Left colon (tissue), 2 donors: ENCODE measurements at regions of chr19 and their contacts with region 1.

Region 1: GRCh38 chr19:13588957-13589833 is 82.9 kb upstream of the CACNA1A start:
- DNase-seq: peak; percentile 37 to 75
- ATAC-seq: peak; percentile 83

Region 2: DNA sequence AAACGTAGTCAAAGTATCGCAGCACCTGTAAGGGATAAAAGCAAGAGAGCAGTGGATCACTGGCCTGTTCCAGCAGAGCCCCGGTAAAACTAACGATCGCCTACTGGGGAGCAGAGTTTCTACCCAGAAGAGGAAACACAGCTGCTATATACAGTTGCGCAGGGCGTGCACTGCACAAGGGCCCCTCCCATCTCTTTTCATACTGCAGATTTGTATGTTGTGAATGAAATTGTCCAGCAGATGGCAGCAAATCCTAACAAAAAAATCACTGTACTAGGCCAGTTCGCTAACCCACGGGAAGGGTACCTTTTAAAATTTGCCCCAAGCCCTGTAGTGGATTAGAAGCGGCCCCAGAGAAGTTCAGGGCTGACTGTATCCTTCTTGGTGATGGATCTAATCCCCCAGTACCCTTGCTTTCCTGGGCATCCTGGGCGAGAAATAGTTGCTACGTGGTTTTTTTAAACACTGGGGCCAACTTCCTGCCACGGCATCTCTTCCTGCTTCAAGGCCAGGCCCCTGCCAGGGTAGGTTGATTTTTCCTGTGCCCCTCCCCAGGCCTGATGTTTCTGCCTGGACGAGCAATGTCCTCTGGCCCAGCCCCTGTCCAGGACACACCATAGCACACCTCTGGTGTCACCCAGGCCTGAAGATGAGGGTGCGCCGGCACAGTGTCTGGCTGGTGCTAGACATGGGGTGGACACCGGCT is 311.9 kb before region 1 on chr19:
- intact Hi-C with region 1: loop called (anchors 5 kb)
- DNase-seq: peak; percentile 33 to 67
- ATAC-seq: peak; percentile 91